ENCODE measurements at regions of chr15 and their contacts with region 1.

Region 1: DNA sequence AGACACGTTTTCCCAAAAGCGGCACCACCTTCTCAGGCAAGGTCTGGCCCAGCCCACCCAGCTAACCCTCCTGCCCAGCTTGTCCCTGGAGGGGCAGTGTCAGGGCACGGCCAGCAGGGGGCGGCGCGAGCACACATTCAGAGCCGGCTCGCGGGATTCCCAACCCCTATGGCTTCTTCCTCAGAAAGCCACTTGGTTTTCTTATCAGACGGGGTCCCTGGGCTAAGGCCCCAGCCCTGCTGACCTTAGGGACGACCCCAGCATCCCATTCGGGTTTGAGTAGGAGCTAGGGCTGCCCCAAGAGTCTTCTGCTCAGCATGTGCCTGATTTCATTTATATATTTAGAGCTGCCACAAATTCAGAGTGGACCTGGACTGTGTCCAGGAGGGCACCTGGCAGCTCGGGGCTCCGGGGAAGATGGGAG is 14.5 kb downstream of the RLBP1 start:
- DNase-seq: peak; percentile 70
- H3K4me3 ChIP-seq: no peak overlapping the region
- H3K27ac ChIP-seq: no peak overlapping the region
- H3K4me1 ChIP-seq: no peaks in the 10 kb centered on the region
- CTCF ChIP-seq: peak; percentile 97

Region 2: GRCh38 chr15:89299896-89300295 is 93.0 kb after region 1 on chr15:
- CTCF ChIA-PET with region 1: no interaction called
- POLR2A ChIA-PET with region 1: interaction called, 3 read pairs
- intact Hi-C with region 1: loop called (anchors 5 kb)
- DNase-seq: no peak
- H3K4me3 ChIP-seq: no peak overlapping the region
- H3K27ac ChIP-seq: no peak overlapping the region
- H3K4me1 ChIP-seq: no peaks in the 10 kb centered on the region
- CTCF ChIP-seq: peak; percentile 44; the same call in 1 of the 2 replicates

Region 3: DNA sequence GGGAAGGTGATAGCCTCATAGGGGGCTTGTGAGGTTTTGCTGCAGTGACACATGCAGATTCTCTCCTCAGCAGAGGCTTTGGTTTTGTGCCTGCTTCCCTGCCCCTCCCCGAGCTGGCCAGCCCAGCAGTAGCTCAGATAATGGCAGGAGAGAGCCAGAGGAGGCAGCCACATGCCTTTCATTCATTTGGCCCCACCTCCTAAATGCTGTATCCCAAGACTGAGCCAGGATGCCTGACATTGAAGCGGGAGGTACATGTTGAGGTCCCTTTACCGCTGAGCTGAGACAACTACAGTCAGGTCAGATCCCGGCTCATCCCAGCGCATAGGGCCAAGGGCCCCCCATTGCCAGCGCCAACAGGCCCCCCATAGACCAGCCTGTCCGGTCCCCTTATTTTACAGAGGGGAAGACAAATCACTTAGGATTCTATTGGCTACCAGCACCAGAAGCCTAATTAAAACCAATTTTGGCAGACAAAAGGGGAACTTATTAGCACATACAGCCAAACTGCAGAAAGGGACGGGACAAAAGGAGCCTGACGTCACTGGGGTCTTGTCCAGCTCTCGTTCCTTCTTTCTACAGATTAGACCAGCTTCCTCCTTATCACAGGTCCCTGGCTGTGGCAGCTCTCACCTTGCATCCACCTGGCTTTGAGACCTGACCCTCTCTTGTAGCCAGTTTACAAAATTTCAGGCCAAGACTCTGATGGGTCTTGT is 139.8 kb after region 1 on chr15:
- CTCF ChIA-PET with region 1: no interaction called
- POLR2A ChIA-PET with region 1: no interaction called
- intact Hi-C with region 1: no loop called
- DNase-seq: no peak
- H3K4me3 ChIP-seq: no peak overlapping the region
- H3K27ac ChIP-seq: no peak overlapping the region
- H3K4me1 ChIP-seq: no peaks in the 10 kb centered on the region
- CTCF ChIP-seq: no peak